A673 (cell line): ENCODE measurements at regions of chr15 and their contacts with region 1.

Region 1: DNA sequence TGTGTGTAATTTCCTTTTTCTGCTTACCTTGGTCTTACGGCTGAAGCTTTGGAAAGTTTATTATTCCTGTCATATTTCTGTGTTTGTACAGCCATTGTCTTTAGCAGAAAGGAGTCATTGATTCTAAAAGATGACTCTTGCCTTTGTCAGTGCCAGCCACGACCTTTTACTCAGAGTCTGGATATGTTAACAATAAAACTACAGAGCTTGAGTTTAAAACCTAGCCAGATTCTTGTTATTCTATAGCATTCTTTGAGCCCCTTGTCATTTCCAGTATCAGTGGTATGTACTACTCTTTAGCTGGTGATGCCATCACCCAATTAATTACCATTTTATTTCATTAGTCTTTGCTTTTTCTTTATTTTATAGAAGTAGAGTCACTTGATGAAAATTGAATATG is 142.4 kb downstream of the TCF12 start:
- DNase-seq: no peak
- H3K4me3 ChIP-seq: no peak overlapping the region
- H3K27ac ChIP-seq: no peak overlapping the region
- H3K4me1 ChIP-seq: peaks cover 31% of the 10 kb centered on the region
- H3K27me3 ChIP-seq: no peaks in the 10 kb centered on the region
- CTCF ChIP-seq: no peak

Region 2: DNA sequence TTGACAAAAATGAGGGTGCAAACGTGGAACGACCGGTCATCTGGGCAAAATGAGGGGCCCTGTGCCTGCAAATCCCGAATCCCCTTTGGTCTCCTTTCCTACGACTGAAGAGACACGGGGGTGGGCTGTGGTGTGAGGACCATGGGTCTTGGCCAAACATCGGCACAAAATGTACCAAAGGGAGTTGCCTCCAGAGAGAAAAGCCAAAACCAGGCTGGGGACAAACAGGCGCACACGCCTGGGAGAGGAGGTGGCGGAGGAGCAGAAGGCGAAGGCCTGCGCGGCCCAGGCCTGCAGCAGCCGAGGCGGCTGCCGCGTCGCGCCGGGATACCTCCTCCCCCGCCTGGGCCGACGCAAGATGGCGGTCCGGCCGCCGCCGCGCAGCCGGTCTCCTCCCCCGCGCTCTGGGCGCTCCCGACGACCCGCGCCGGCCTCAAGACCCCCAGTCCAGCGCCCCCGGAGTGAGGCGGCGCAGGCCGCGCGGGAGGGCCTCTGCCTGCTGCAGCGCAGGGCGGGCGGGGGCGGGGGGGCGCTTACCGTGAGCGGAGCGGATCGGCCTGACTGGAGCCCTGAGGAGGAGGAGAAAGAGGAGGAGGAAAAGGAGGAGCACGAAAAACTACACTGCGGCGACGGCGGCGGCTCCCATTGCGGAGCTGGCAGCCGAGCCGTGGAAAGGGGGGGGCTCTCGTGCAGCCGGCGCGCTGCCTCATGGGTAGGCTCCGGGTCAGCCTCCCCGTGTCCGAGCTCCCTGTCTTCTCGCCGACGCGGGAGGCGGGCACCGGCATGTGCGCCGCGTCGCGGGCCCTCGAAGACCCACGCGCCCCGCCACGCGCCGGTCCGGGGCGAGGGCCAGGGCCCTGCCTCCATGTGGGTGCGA is 327.6 kb before region 1 on chr15 and contains the start of gene ZNF280D:
- CTCF ChIA-PET with region 1: no interaction called
- POLR2A ChIA-PET with region 1: no interaction called
- intact Hi-C with region 1: no loop called
- DNase-seq: peak; percentile 94
- H3K4me3 ChIP-seq: peak within 1 kb of the TSS; percentile 59
- H3K27ac ChIP-seq: peak within 1 kb of the TSS; percentile 94
- H3K4me1 ChIP-seq: peaks cover 37% of the 10 kb centered on the region
- H3K27me3 ChIP-seq: no peaks in the 10 kb centered on the region
- CTCF ChIP-seq: no peak
- total RNA-seq, gene ZNF280D: 42.9 and 44.1 TPM in 2 replicates

Region 3: DNA sequence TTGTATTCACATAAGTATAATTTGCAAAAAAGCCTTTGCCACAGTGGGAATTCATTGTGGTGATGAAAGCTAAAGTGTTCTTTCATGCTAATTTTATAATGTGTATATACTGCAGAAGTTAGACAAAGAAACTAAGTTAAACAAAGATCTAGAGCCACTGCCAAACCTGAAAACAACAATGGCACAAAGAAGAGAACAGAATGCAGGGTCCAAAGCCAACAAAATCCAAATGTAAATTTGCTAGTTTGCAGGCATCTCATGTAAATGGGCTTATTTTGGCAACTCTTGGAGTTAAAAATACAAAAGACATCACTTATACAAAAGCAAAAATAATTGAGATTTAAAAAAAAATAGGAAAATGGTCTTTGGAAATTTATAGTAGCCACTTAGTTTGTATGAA is 19.4 kb before region 1 on chr15:
- CTCF ChIA-PET with region 1: no interaction called
- POLR2A ChIA-PET with region 1: no interaction called
- intact Hi-C with region 1: loop called (anchors 2 kb)
- DNase-seq: no peak
- H3K4me3 ChIP-seq: no peak overlapping the region
- H3K27ac ChIP-seq: no peak overlapping the region
- H3K4me1 ChIP-seq: peaks cover 20% of the 10 kb centered on the region
- H3K27me3 ChIP-seq: no peaks in the 10 kb centered on the region
- CTCF ChIP-seq: no peak

Region 4: GRCh38 chr15:57306161-57306943 is 245.6 kb after region 1 on chr15:
- CTCF ChIA-PET with region 1: no interaction called
- POLR2A ChIA-PET with region 1: no interaction called
- intact Hi-C with region 1: no loop called
- DNase-seq: peak; percentile 67
- H3K4me3 ChIP-seq: peak overlapping the region; percentile 37
- H3K27ac ChIP-seq: peak overlapping the region; percentile 62
- H3K4me1 ChIP-seq: peaks cover 11% of the 10 kb centered on the region
- H3K27me3 ChIP-seq: no peaks in the 10 kb centered on the region
- CTCF ChIP-seq: peak; percentile 94